ENCODE measurements at regions of chr14 and their contacts with region 1.

Region 1: GRCh38 chr14:33848706-33849454 is 102.0 kb downstream of the EGLN3 start:
- DNase-seq: peak; percentile 40
- ATAC-seq: no peak
- H3K4me3 Mint-ChIP-seq: no peak overlapping the region
- H3K27ac Mint-ChIP-seq: no peak overlapping the region
- H3K4me1 Mint-ChIP-seq: no peaks in the 10 kb centered on the region
- H3K27me3 Mint-ChIP-seq: no peaks in the 10 kb centered on the region
- CTCF ChIP-seq: peak; percentile 54

Region 2: GRCh38 chr14:33592297-33592696 is 256.6 kb before region 1 on chr14:
- CTCF ChIA-PET with region 1: no interaction called
- POLR2A ChIA-PET with region 1: no interaction called
- intact Hi-C with region 1: no loop called
- DNase-seq: no peak
- ATAC-seq: no peak
- H3K4me3 Mint-ChIP-seq: no peak overlapping the region
- H3K27ac Mint-ChIP-seq: no peak overlapping the region
- H3K4me1 Mint-ChIP-seq: no peaks in the 10 kb centered on the region
- H3K27me3 Mint-ChIP-seq: peaks cover 1% of the 10 kb centered on the region
- CTCF ChIP-seq: no peak

Region 3: DNA sequence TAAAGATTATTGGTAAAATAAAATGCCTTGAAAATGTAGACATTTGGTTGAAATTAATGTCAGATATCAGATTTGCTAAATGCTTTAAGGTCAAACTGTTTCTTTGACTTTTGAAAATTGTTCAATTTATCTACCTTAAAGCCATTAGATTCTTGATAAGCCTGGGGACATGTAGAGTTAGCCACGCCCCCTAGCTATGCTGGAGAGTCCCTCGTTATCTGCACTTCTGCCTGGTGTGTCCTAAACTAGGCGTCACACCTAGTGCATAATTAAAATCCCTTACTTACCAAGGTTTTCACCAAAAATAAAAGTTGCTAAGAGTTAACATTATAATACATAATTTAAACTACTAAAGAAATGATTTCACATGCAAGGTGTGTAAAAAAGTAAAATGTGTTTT is 22.5 kb after region 1 on chr14:
- CTCF ChIA-PET with region 1: no interaction called
- POLR2A ChIA-PET with region 1: no interaction called
- intact Hi-C with region 1: no loop called
- DNase-seq: no peak
- ATAC-seq: no peak
- H3K4me3 Mint-ChIP-seq: no peak overlapping the region
- H3K27ac Mint-ChIP-seq: no peak overlapping the region
- H3K4me1 Mint-ChIP-seq: no peaks in the 10 kb centered on the region
- H3K27me3 Mint-ChIP-seq: no peaks in the 10 kb centered on the region
- CTCF ChIP-seq: no peak

Region 4: GRCh38 chr14:34098045-34098984 is 249.4 kb after region 1 on chr14:
- CTCF ChIA-PET with region 1: interaction called, 23 read pairs
- POLR2A ChIA-PET with region 1: no interaction called
- intact Hi-C with region 1: loop called (anchors 5 kb)
- DNase-seq: peak; percentile 23
- ATAC-seq: peak; percentile 24
- H3K4me3 Mint-ChIP-seq: no peak overlapping the region
- H3K27ac Mint-ChIP-seq: no peak overlapping the region
- H3K4me1 Mint-ChIP-seq: peaks cover 12% of the 10 kb centered on the region
- H3K27me3 Mint-ChIP-seq: peaks cover 3% of the 10 kb centered on the region
- CTCF ChIP-seq: peak; percentile 67

Measured in activated CD8-positive, alpha-beta T cell treated with anti-CD3 and anti-CD28 coated beads for 36 hours (primary cell).